AG04450 (cell line): ENCODE measurements at regions of chr15 and their contacts with region 1.

Region 1: DNA sequence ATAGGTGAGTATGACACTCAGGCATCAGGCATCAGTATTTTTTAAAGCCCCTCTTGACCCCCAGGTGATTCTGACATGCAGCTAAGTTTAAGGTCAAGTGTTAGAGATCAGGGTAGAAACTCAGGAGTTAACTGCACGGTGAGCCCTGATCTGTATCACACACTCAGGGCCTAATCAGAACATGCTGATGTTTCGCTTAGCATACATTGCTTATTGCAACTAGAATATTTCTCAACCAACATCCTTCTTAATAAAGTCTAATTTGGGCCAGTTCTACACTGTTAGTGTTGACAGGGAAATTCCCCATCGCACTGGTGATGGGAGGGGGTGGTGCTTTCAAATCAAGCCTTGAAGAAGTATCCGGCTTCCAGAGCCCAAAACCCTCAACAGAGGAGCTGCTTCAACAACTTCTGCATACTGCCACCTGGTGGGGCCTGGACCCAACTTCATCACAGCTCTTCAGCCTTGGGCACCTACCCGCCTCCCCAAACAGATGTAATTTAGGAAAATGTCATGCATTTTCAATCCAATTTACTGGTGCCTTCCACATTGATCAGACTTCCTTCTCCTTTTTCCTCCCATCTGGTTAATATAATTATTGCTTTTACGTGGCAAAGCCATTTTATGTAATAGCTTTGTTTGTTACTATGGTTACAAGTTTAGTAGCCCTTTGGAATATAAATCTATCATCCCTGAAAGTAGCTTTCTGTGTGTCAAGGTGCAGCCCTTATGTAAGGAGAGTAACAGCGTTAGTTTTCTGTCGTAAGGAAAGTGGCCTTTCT is 312.2 kb downstream of the RORA start:
- DNase-seq: peak; percentile 54
- H3K4me3 ChIP-seq: no peak overlapping the region
- H3K27ac ChIP-seq: no peak overlapping the region
- H3K27me3 ChIP-seq: peaks cover 7% of the 10 kb centered on the region
- CTCF ChIP-seq: peak; percentile 83

Region 2: DNA sequence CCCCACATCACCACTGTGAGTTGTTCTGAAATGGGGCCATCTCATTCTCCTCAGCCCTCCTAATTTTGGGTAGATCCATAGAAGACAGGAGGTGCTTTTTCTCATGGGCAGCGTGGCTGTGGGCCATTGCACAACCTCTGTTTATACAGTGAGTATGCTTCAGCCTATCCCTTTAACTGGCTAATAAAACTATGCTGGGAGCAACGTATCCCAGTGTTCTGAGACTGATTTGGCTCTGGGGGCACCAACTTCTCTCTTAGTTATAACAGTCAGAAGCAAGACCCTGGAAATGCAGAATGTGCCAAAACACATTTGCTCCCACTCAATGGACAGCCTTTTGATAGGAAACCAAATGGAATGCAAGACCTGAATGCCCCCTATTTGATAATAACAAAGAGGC is 340.8 kb before region 1 on chr15:
- CTCF ChIA-PET with region 1: interaction called, 10 read pairs
- POLR2A ChIA-PET with region 1: no interaction called
- DNase-seq: no peak
- H3K4me3 ChIP-seq: no peak overlapping the region
- H3K27ac ChIP-seq: no peak overlapping the region
- H3K27me3 ChIP-seq: peaks cover 2% of the 10 kb centered on the region
- CTCF ChIP-seq: no peak

Region 3: GRCh38 chr15:60591496-60592370 is 325.1 kb before region 1 on chr15:
- CTCF ChIA-PET with region 1: interaction called, 203 read pairs
- POLR2A ChIA-PET with region 1: no interaction called
- DNase-seq: no peak
- H3K4me3 ChIP-seq: peak overlapping the region; percentile 61
- H3K27ac ChIP-seq: no peak overlapping the region
- H3K27me3 ChIP-seq: peaks cover 21% of the 10 kb centered on the region
- CTCF ChIP-seq: no peak

Region 4: DNA sequence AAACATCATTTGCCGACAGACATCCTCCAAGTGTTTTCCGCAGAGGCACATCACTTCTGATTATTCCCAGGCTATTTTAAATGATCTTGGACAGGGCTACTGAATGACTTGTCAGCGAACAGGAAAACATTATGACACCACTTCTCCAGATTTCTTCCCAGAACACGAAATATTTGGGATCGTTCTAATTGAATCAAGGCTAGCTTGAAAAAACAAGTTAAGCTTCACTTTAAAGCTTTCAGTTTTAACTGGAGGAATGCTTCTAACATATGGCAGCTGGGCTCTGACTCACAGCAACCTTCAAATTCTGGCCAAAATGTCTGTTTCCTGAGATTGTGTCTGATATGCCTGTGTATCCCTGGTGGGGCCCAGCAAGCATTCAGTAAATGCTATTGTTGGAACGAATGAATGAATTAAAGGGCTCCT is 311.0 kb before region 1 on chr15:
- CTCF ChIA-PET with region 1: interaction called, 17 read pairs
- POLR2A ChIA-PET with region 1: no interaction called
- DNase-seq: peak; percentile 27
- H3K4me3 ChIP-seq: peak overlapping the region; percentile 43
- H3K27ac ChIP-seq: no peak overlapping the region
- H3K27me3 ChIP-seq: peaks cover 8% of the 10 kb centered on the region
- CTCF ChIP-seq: no peak

Region 5: DNA sequence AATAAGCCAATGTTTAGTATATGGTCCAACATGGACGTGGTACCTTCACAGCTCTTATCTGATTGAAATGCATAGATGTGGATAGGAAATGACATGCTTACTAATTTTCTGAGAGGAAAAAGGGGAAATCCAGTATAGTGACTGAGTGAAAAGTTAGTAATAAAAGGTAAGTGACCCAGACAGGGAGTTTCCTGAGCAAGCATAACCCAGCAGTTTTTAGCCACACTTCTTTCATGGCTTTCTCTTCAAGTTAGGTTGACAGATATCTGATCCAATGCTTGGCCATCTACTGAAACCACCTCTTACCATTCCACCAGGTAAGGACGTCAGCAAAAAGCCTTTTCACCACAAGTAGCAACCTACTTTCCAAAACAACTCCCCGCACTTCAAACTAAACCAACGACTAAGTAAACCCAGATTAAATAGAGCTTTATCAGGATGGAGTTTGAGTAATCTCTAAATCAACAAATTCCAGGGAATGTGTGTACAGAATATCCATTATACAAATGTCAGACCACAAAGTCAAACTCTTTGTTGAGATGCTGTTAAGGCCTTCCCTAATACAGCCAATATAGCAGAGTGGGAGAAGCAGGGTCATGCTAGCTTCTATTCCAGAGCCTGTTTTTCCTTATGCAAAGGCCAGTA is 17.4 kb before region 1 on chr15:
- CTCF ChIA-PET with region 1: interaction called, 31 read pairs
- POLR2A ChIA-PET with region 1: no interaction called
- DNase-seq: no peak
- H3K4me3 ChIP-seq: no peak overlapping the region
- H3K27ac ChIP-seq: no peak overlapping the region
- H3K27me3 ChIP-seq: peaks cover 1% of the 10 kb centered on the region
- CTCF ChIP-seq: no peak

Region 6: GRCh38 chr15:60905587-60905986 is 11.3 kb before region 1 on chr15:
- CTCF ChIA-PET with region 1: interaction called, 31 read pairs
- POLR2A ChIA-PET with region 1: no interaction called
- DNase-seq: no peak
- H3K4me3 ChIP-seq: no peak overlapping the region
- H3K27ac ChIP-seq: no peak overlapping the region
- H3K27me3 ChIP-seq: peaks cover 5% of the 10 kb centered on the region
- CTCF ChIP-seq: 0 out of 2 replicates have a peak, but pooled peaks have one; percentile 8

Region 7: DNA sequence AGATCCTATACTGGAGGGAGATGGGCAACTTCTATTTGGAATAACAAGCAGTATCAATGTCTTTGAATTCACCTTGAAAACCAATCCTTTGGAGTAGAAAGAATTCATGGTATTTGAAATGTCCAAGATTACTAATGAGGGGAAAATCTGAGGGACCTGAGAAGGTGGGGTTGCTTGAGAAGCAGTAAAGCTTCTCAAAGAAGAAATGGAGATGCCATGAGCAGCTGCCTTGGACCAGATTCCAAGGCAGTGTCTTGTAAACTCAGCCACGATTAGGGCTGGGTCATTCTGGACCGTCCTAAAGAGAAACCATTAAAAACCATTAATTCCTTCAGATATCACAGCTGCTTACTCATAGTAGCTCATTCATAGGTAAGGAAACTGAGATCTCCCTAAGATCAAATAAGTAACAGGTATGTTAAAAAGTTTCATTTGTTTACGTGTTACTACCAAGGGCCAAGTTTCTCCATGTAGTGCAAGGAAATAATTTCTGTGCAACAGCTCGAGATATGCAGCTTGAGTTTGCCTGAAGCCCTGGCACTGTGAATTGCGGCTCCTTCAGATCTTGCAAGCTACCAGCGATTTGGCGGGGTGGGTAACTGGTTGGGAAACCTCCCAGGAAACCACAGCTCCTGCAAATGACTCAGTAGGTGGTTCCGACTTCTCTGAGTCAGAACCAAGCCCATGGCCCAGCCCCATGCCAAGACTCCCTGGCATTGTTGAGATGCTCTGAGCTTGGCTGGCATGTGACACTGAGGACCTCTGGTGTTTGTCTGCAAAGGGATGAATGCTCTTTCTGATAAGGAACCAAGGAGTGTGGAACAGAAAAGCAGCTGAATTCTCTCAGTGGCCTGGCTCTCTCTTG is 15.4 kb after region 1 on chr15:
- CTCF ChIA-PET with region 1: interaction called, 22 read pairs
- POLR2A ChIA-PET with region 1: no interaction called
- DNase-seq: no peak
- H3K4me3 ChIP-seq: no peak overlapping the region
- H3K27ac ChIP-seq: no peak overlapping the region
- H3K27me3 ChIP-seq: no peaks in the 10 kb centered on the region
- CTCF ChIP-seq: no peak